RWPE1 (cell line): ENCODE measurements at regions of chr14 and their contacts with region 1.

Region 1: GRCh38 chr14:99529899-99530298 is 48.7 kb downstream of the CCNK start:
- DNase-seq: no peak
- H3K27ac ChIP-seq: peak overlapping the region; percentile 60; the same call in 1 of the 2 replicates
- CTCF ChIP-seq: no peak

Region 2: DNA sequence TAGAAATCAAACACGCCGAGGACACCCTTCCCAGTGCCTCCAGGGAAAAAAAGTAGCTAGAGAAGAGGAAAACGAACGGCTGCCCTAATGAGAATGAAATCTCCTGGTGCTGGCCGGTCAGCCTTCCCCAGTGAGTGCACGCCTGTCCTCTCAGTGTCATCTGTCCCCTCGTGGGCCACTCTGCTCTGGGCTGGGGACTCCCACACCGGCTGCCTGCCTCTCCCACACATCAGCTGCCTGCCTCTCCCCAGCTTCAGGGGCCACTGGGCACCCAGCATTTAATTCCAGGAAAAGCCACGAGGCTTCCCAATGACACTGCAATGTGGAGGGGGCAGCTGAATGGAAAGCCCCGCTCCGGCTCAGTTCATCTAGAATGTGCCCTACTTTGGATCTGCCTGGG is 15.1 kb after region 1 on chr14:
- CTCF ChIA-PET with region 1: no interaction called
- POLR2A ChIA-PET with region 1: no interaction called
- DNase-seq: no peak
- H3K27ac ChIP-seq: 0 out of 2 replicates have a peak overlapping the region, but pooled peaks have one; percentile 5
- CTCF ChIP-seq: no peak

Region 3: GRCh38 chr14:99606359-99606758 is 76.5 kb after region 1 on chr14:
- CTCF ChIA-PET with region 1: interaction called, 3 read pairs
- POLR2A ChIA-PET with region 1: interaction called, 13 read pairs
- DNase-seq: no peak
- H3K27ac ChIP-seq: peak overlapping the region; percentile 95
- CTCF ChIP-seq: no peak